Natural killer cell (primary cell): ENCODE measurements at regions of chr6 and their contacts with region 1.

Region 1: GRCh38 chr6:109073344-109074132 is 21.1 kb downstream of the SESN1 start:
- DNase-seq: peak in 1 of 2 donors; percentile 89
- ATAC-seq: peak; percentile 67 to 79 (median 73)
- H3K4me3 ChIP-seq: no peak overlapping the region
- H3K4me3 Mint-ChIP-seq: peak overlapping the region; percentile 54
- H3K27ac ChIP-seq: no peak overlapping the region
- H3K27ac Mint-ChIP-seq: peak overlapping the region; percentile 8 to 84
- H3K4me1 ChIP-seq: peaks cover 13% of the 10 kb centered on the region
- H3K4me1 Mint-ChIP-seq: peaks cover 30 to 38% of the 10 kb centered on the region in 2 donors
- H3K27me3 ChIP-seq: no peaks in the 10 kb centered on the region
- H3K27me3 Mint-ChIP-seq: no peaks in the 10 kb centered on the region
- CTCF ChIP-seq: peak; percentile 86

Region 2: DNA sequence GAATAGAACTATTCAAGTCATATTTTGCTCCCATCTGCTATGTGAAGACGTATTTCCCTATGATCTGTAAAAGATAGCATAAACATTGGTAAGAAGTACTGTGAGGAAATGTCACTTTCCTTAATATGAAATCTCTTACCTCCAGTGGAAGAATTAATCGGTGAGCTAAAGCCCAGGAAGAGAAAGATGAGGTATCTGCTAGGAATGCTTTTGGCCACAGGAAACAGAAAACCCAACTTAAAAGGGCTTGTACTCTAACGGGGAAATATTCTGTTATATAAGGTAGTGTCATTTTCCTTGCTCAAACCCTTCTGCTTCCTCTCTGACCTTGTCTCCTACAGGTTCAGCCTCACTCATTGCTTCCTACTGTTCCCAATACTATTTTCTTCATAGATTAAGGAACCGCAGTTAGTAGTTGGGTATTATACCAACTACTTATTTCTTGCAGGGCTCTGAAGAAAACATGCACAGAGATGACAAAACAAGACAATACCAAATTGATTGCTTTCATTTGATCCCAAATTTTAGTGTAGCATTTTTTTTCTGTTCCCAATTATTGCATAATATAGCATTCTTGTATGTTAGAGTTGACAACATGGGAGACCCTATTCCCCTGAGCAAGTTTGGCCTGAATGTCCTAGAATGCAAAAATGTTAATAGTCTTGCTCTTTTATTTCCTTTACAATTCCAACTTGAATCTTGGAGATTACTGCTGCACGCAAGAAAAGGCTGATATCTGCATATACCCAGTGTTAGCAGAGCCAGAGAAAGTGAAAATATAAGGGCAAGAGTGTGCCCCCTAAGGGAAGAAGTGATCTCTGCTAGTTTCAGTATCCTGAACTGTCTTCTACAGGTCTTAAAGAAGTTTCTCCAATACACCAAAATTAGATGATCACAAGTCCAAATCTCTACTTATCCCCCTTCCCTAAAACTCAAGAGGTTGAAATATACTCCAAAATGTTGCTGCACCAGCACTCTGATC is 713.3 kb before region 1 on chr6:
- intact Hi-C with region 1: no loop called
- DNase-seq: peak in 1 of 2 donors; percentile 5
- ATAC-seq: no peak
- H3K4me3 ChIP-seq: no peak overlapping the region
- H3K4me3 Mint-ChIP-seq: no peak overlapping the region
- H3K27ac ChIP-seq: no peak overlapping the region
- H3K27ac Mint-ChIP-seq: no peak overlapping the region
- H3K4me1 ChIP-seq: no peaks in the 10 kb centered on the region
- H3K4me1 Mint-ChIP-seq: no peaks in the 10 kb centered on the region
- H3K27me3 ChIP-seq: no peaks in the 10 kb centered on the region
- H3K27me3 Mint-ChIP-seq: no peaks in the 10 kb centered on the region
- CTCF ChIP-seq: no peak

Region 3: DNA sequence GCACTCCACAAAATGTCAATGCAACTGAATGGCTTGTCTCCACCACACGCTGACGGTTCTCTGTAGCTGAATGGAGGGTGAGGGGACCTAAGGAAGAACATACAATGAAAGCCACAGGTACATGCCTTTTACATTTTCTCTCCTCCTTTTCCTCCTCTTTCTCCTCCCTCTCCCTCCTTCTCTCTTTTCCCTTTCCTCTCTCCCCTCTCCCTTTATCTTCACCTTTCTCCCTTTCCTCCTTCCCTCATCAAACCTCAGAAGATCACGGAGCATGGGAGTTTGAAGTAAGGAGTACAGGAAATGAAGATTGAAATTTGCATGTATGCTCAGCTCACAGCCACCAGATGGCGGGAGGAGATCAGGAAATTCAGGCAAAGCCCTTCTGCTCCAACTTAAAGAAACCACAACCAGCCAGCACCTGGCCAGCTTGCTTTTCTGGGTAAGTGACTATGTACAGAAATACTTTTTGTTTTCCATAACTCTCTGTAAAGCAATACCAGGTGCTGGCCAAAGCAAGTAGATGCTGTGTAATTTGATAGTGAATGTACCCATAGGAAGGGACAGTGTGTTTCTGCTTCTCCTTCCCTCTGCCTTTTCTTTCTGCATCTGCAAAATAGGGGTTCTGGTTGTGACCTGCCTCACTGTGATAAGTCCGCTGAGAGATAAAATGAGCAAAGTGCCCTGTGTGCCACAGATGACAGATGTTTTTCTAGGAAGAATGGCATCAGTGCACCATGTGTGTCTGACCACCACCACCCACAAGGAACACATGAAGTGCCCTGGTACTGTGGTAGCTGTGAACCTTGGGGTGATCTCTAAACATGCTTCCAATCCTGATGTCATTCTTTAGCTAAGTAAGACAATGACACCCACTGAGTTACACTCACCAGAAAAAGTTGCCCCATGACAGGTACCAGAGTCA is 531.4 kb before region 1 on chr6:
- intact Hi-C with region 1: loop called (anchors 1 kb)
- DNase-seq: peak; percentile 56 to 90
- ATAC-seq: peak; percentile 77 to 81 (median 81)
- H3K4me3 ChIP-seq: no peak overlapping the region
- H3K4me3 Mint-ChIP-seq: no peak overlapping the region
- H3K27ac ChIP-seq: no peak overlapping the region
- H3K27ac Mint-ChIP-seq: peak overlapping the region in 1 of 2 donors; percentile 41
- H3K4me1 ChIP-seq: peaks cover 13% of the 10 kb centered on the region
- H3K4me1 Mint-ChIP-seq: peaks cover 28 to 41% of the 10 kb centered on the region in 2 donors
- H3K27me3 ChIP-seq: no peaks in the 10 kb centered on the region
- H3K27me3 Mint-ChIP-seq: no peaks in the 10 kb centered on the region
- CTCF ChIP-seq: peak; percentile 95

Region 4: GRCh38 chr6:108835218-108835850 is 238.2 kb before region 1 on chr6:
- intact Hi-C with region 1: loop called (anchors 2 kb)
- DNase-seq: peak; percentile 80 to 92
- ATAC-seq: peak; percentile 77 to 92 (median 78)
- H3K4me3 ChIP-seq: no peak overlapping the region
- H3K4me3 Mint-ChIP-seq: peak overlapping the region; percentile 32
- H3K27ac ChIP-seq: no peak overlapping the region
- H3K27ac Mint-ChIP-seq: peak overlapping the region; percentile 2 to 31
- H3K4me1 ChIP-seq: peaks cover 29% of the 10 kb centered on the region
- H3K4me1 Mint-ChIP-seq: peaks cover 41 to 46% of the 10 kb centered on the region in 2 donors
- H3K27me3 ChIP-seq: no peaks in the 10 kb centered on the region
- H3K27me3 Mint-ChIP-seq: no peaks in the 10 kb centered on the region
- CTCF ChIP-seq: peak; percentile 94

Region 5: GRCh38 chr6:108904741-108905140 is 168.8 kb before region 1 on chr6:
- intact Hi-C with region 1: loop called (anchors 2 kb)
- DNase-seq: peak; percentile 31 to 33
- ATAC-seq: peak; percentile 74 to 92 (median 82)
- H3K4me3 ChIP-seq: no peak overlapping the region
- H3K4me3 Mint-ChIP-seq: peak overlapping the region; percentile 59
- H3K27ac ChIP-seq: peak overlapping the region; percentile 71
- H3K27ac Mint-ChIP-seq: peak overlapping the region; percentile 74 to 95
- H3K4me1 ChIP-seq: peaks cover 41% of the 10 kb centered on the region
- H3K4me1 Mint-ChIP-seq: peaks cover 46 to 48% of the 10 kb centered on the region in 2 donors
- H3K27me3 ChIP-seq: no peaks in the 10 kb centered on the region
- H3K27me3 Mint-ChIP-seq: no peaks in the 10 kb centered on the region
- CTCF ChIP-seq: no peak

Region 6: DNA sequence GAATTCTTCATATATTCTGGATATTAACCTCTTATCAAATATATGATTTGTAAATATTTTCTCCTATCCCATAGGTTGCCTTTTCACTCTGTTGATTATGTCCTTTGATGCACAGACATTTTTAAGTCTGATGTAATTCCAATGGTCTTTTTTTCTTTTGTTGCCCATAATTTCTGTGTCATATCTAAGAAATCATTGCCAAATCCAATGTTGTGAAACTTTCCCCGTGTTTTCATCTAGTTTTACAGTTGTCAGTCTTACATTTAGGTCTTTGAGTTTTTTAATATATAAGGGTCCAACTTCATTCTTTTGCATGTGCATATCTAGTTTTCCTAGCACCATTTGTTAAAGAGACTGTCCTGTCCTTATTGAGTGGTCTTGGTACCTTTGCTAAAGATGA is 90.4 kb before region 1 on chr6:
- intact Hi-C with region 1: no loop called
- DNase-seq: no peak
- ATAC-seq: no peak
- H3K4me3 ChIP-seq: no peak overlapping the region
- H3K4me3 Mint-ChIP-seq: no peak overlapping the region
- H3K27ac ChIP-seq: no peak overlapping the region
- H3K27ac Mint-ChIP-seq: no peak overlapping the region
- H3K4me1 ChIP-seq: no peaks in the 10 kb centered on the region
- H3K4me1 Mint-ChIP-seq: peaks cover 0 to 5% of the 10 kb centered on the region in 2 donors
- H3K27me3 ChIP-seq: no peaks in the 10 kb centered on the region
- H3K27me3 Mint-ChIP-seq: no peaks in the 10 kb centered on the region
- CTCF ChIP-seq: no peak

Region 7: GRCh38 chr6:109009236-109009961 is 64.1 kb before region 1 on chr6:
- intact Hi-C with region 1: loop called (anchors 2 kb)
- DNase-seq: peak; percentile 93 to 97
- ATAC-seq: peak; percentile 92 to 98 (median 95)
- H3K4me3 ChIP-seq: peak overlapping the region; percentile 99
- H3K4me3 Mint-ChIP-seq: peak overlapping the region; percentile 97
- H3K27ac ChIP-seq: peak overlapping the region; percentile 95
- H3K27ac Mint-ChIP-seq: peak overlapping the region; percentile 90 to 99
- H3K4me1 ChIP-seq: peaks cover 12% of the 10 kb centered on the region
- H3K4me1 Mint-ChIP-seq: peaks cover 47 to 57% of the 10 kb centered on the region in 2 donors
- H3K27me3 ChIP-seq: no peaks in the 10 kb centered on the region
- H3K27me3 Mint-ChIP-seq: no peaks in the 10 kb centered on the region
- CTCF ChIP-seq: no peak